MCF 10A (cell line): ENCODE measurements at regions of chr5 and their contacts with region 1.

Region 1: DNA sequence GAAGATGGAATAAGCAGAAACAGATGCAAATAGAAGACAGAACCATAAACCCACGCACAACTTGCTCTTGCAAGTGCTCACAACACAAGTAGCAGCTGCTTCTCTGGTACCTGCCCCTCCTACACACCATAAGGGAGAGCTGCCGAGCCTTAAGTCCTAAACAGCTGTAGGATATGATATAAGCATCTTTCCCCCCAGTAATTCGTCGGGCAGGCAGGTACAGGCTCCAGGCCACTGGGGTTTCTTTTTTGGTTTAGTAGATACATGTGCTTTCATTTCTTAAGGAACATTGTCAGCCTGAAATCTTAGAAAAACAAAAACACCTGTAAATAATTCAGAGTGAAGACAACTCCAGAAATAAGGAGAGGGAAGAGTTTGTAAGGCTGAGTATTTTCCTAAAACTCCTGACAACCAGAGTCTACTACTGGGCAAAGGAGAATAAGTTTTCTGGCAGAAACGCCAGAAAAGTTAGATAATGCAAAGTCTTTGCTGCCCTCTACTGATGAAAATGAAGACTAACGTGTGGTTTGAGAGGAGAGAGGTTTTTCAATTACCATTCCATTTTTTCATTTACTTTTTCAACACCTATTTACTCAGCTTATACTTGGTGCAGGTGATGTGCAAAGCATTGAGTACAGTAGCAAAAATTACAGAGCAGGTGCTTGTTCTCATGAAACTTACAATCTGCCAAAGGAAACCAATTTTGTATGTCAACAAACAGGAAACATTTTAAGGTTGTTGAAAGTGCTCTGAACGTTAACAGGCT is 20.1 kb upstream of the TCERG1 start:
- DNase-seq: peak; percentile 66
- H3K4me3 Mint-ChIP-seq: no peak overlapping the region
- H3K27ac Mint-ChIP-seq: no peak overlapping the region
- H3K4me1 Mint-ChIP-seq: no peaks in the 10 kb centered on the region
- H3K27me3 Mint-ChIP-seq: no peaks in the 10 kb centered on the region
- CTCF ChIP-seq: peak; percentile 85

Region 2: GRCh38 chr5:145903113-145903512 is 523.9 kb before region 1 on chr5:
- CTCF ChIA-PET with region 1: no interaction called
- POLR2A ChIA-PET with region 1: no interaction called
- intact Hi-C with region 1: loop called (anchors 10 kb)
- DNase-seq: no peak
- H3K4me3 Mint-ChIP-seq: no peak overlapping the region
- H3K27ac Mint-ChIP-seq: no peak overlapping the region
- H3K4me1 Mint-ChIP-seq: peaks cover 1% of the 10 kb centered on the region
- H3K27me3 Mint-ChIP-seq: no peaks in the 10 kb centered on the region
- CTCF ChIP-seq: peak; percentile 15

Region 3: GRCh38 chr5:146130440-146131045 is 296.5 kb before region 1 on chr5:
- CTCF ChIA-PET with region 1: interaction called, 25 read pairs
- POLR2A ChIA-PET with region 1: no interaction called
- intact Hi-C with region 1: no loop called
- DNase-seq: peak; percentile 59
- H3K4me3 Mint-ChIP-seq: no peak overlapping the region
- H3K27ac Mint-ChIP-seq: peak overlapping the region; percentile 27
- H3K4me1 Mint-ChIP-seq: no peaks in the 10 kb centered on the region
- H3K27me3 Mint-ChIP-seq: no peaks in the 10 kb centered on the region
- CTCF ChIP-seq: peak; percentile 70

Region 4: GRCh38 chr5:146291421-146292074 is 135.5 kb before region 1 on chr5:
- CTCF ChIA-PET with region 1: interaction called, 51 read pairs
- POLR2A ChIA-PET with region 1: interaction called, 3 read pairs
- intact Hi-C with region 1: loop called (anchors 1 kb)
- DNase-seq: peak; percentile 84
- H3K4me3 Mint-ChIP-seq: no peak overlapping the region
- H3K27ac Mint-ChIP-seq: no peak overlapping the region
- H3K4me1 Mint-ChIP-seq: no peaks in the 10 kb centered on the region
- H3K27me3 Mint-ChIP-seq: no peaks in the 10 kb centered on the region
- CTCF ChIP-seq: peak; percentile 64

Region 5: DNA sequence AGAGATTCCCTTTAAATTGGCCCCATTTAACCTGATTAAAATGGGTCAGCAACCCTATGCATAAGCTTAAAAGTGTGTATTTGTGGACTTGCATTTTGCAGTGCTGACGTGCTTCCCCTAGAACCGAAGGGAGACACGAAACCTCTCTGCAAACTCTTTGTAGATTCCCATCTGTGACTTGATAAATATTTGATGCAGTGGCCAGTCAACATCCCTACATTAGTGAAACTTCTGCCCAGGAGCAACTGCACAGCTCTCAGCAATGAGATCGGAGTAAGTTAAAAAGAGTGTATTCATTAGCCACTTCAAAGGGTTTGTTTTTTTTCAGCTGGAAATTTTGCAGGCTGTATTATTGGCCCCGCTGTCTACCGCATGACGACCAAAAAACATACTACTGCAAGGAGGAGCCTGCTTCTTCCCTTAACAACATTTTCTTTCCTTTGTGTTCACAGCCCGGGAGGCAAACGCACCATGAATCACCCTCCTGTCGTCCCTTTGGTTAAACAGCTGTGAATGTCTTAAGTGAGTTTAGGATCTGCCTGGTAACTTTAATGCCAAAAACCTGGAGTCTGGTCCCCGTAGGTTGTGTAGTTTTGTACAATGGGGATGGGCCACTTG is 17.9 kb before region 1 on chr5:
- CTCF ChIA-PET with region 1: interaction called, 28 read pairs
- POLR2A ChIA-PET with region 1: interaction called, 3 read pairs
- intact Hi-C with region 1: no loop called
- DNase-seq: peak; percentile 67
- H3K4me3 Mint-ChIP-seq: peak overlapping the region; percentile 39
- H3K27ac Mint-ChIP-seq: no peak overlapping the region
- H3K4me1 Mint-ChIP-seq: peaks cover 13% of the 10 kb centered on the region
- H3K27me3 Mint-ChIP-seq: no peaks in the 10 kb centered on the region
- CTCF ChIP-seq: no peak

Region 6: GRCh38 chr5:146653560-146653959 is 226.5 kb after region 1 on chr5:
- CTCF ChIA-PET with region 1: no interaction called
- POLR2A ChIA-PET with region 1: no interaction called
- intact Hi-C with region 1: no loop called
- DNase-seq: no peak
- H3K4me3 Mint-ChIP-seq: no peak overlapping the region
- H3K27ac Mint-ChIP-seq: no peak overlapping the region
- H3K4me1 Mint-ChIP-seq: no peaks in the 10 kb centered on the region
- H3K27me3 Mint-ChIP-seq: no peaks in the 10 kb centered on the region
- CTCF ChIP-seq: no peak